ENCODE measurements at regions of chr3 and their contacts with region 1.

Region 1: DNA sequence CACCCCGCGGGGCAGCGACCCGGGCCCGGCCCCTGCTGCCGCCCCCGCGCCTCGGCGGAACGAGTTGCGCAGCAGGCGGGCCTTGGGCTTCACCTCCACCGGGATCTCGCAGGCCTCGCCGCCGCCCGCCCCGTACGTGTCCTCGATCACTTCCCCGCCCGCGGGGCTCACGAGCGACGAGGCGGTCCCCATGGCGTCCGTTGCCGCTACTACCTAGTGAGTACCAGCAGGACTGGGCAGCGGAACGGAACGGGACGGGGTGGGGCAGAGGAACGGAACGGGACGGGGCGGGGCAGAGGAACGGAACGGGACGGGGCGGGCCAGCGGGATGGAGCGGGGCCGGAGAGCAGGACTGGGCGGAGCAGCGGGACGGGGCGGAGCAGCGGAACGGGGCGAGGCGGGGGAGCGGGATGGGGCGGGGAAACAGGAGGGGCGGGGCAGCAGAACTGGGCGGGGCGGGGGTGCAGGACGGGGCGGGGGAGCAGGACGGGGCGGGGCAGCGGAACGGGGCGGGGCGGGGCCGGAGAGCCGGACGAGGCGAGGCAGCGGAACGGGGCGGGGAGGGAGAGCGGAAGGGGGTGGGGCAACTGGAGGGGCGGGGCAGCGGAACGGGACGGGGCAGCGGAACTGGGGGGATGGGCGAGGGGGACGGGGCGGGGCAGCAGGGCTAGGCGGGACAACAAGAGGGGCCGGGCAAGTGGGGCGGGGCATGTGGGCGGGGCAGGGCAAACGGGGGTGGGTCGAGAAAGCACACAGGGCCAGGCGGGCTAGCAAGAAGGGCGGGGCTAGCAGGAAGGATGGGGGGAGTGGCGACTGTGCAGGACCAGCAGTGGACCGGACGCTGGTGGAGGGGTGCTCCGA is at the start of gene NPHP3:
- DNase-seq: peak; percentile 98
- H3K4me3 ChIP-seq: peak within 1 kb of the TSS; percentile 95
- H3K27ac ChIP-seq: peak within 1 kb of the TSS; percentile 91
- H3K4me1 ChIP-seq: peaks cover 23% of the 10 kb centered on the region
- H3K27me3 ChIP-seq: no peaks in the 10 kb centered on the region
- total RNA-seq, gene NPHP3: 27.2 and 29.5 TPM in 2 replicates

Region 2: GRCh38 chr3:133620066-133620784 is 897.8 kb after region 1 on chr3:
- in situ Hi-C with region 1: loop called (anchors 25 kb)
- DNase-seq: no peak
- H3K4me3 ChIP-seq: no peak overlapping the region
- H3K27ac ChIP-seq: no peak overlapping the region
- H3K4me1 ChIP-seq: no peaks in the 10 kb centered on the region
- H3K27me3 ChIP-seq: no peaks in the 10 kb centered on the region

Region 3: GRCh38 chr3:134630506-134630905 is 1908.1 kb after region 1 on chr3:
- in situ Hi-C with region 1: no loop called
- DNase-seq: peak; percentile 44
- H3K4me3 ChIP-seq: no peak overlapping the region
- H3K27ac ChIP-seq: no peak overlapping the region
- H3K4me1 ChIP-seq: no peaks in the 10 kb centered on the region
- H3K27me3 ChIP-seq: no peaks in the 10 kb centered on the region

Measured in GM23248 (cell line).